Sigmoid colon (tissue), 7 donors: ENCODE measurements at regions of chr17 and their contacts with region 1.

Region 1: DNA sequence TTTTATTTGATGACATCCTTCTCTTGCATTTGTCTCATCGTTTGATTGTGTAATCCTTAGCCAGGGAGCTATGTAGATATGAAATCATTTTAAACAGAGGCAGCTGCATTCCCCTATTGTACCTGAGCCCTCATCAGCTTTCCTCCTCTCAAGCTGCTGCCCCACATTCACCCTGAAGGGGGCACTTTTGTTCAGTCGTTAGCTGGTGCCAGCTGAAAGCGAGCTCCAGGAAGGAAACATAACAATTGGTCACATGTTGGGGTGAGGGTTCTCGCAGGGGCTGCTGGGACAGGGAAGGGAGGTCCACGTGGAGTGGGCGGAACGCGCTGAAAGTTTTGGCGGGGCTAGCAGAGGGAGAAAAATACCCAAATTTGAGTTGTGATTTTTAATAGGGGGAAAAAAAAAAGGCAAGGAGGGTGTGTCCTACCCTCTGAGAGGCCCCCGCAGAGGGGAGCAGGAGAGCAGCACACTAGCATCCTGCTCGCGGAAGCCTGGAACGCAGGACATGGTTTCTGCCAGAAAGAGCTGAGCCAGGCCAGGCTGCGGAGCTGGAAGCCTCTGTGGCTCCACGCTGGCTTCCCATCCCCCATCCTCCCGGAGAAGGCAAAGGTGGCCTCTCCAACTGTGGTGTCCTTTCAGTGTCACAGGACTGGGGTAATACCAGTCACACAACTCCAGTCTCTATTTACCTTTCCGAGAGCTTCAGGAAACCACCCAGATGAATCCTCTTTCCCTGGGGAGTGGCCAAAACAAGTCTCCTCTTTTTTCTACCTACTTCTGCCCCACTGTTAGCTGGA is 8.5 kb upstream of the MSL1 start:
- DNase-seq: peak; percentile 98
- H3K4me3 ChIP-seq: peak overlapping the region; percentile 8 to 51 (median 43)
- H3K27ac ChIP-seq: peak overlapping the region; percentile 97 to 100 (median 98)
- H3K4me1 ChIP-seq: peaks cover 0 to 66% (median 59%) of the 10 kb centered on the region in 4 donors
- H3K27me3 ChIP-seq: no peaks in the 10 kb centered on the region
- CTCF ChIP-seq: peak; percentile 81 to 98 (median 86)
- EP300 ChIP-seq: peak in 1 of 4 donors; percentile 91
- POLR2A ChIP-seq: peak in 1 of 2 donors; percentile 6

Region 2: DNA sequence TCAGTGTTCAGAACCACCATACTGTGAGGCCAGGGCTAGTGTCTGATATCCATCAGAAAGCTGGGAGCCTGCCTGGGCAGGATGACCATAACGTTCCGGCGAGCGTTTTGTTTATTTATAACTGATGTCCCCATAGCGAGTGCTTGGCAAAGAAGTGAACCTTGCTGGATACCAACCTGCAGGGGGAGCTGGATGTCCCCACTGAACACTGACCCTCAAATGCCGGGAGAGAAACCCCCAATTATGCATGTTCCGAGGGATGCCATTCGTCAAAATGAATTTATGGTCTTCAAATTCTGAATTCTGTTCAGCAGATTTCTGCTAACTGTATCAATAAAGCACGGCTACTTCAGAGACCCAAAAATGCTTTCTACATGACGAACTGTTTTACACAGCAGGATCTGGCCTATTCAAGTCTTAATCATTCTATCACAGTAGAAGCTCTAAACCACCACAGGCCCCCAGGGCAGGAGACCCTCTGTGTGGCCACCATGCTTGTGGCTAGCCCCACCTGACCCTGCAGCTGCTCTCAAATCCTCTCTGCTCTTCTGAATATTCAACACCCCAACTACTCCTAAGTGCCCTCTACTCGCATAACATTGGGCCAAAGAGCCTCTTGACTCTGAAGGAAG is 74.3 kb before region 1 on chr17:
- intact Hi-C with region 1: loop called (anchors 2 kb)
- DNase-seq: peak; percentile 96
- H3K4me3 ChIP-seq: no peak overlapping the region
- H3K27ac ChIP-seq: peak overlapping the region; percentile 80 to 86 (median 84)
- H3K4me1 ChIP-seq: peaks cover 0 to 41% (median 35%) of the 10 kb centered on the region in 4 donors
- H3K27me3 ChIP-seq: no peaks in the 10 kb centered on the region
- CTCF ChIP-seq: peak; percentile 77 to 85 (median 83)
- EP300 ChIP-seq: peak; percentile 17 to 83 (median 70)
- POLR2A ChIP-seq: no peak

Region 3: GRCh38 chr17:40062329-40063186 is 50.8 kb before region 1 on chr17 and contains the start of gene THRA:
- intact Hi-C with region 1: loop called (anchors 2 kb)
- DNase-seq: peak; percentile 88
- H3K4me3 ChIP-seq: peak within 1 kb of the TSS; percentile 87 to 98 (median 95)
- H3K27ac ChIP-seq: peak within 1 kb of the TSS; percentile 96 to 99 (median 98)
- H3K4me1 ChIP-seq: peaks cover 0 to 84% (median 64%) of the 10 kb centered on the region in 4 donors
- H3K27me3 ChIP-seq: no peaks in the 10 kb centered on the region
- CTCF ChIP-seq: peak in 1 of 4 experiments; percentile 22
- EP300 ChIP-seq: no peak
- POLR2A ChIP-seq: no peak
- total RNA-seq, gene THRA: 78.8 to 86.1 (median 83.8) TPM

Region 4: DNA sequence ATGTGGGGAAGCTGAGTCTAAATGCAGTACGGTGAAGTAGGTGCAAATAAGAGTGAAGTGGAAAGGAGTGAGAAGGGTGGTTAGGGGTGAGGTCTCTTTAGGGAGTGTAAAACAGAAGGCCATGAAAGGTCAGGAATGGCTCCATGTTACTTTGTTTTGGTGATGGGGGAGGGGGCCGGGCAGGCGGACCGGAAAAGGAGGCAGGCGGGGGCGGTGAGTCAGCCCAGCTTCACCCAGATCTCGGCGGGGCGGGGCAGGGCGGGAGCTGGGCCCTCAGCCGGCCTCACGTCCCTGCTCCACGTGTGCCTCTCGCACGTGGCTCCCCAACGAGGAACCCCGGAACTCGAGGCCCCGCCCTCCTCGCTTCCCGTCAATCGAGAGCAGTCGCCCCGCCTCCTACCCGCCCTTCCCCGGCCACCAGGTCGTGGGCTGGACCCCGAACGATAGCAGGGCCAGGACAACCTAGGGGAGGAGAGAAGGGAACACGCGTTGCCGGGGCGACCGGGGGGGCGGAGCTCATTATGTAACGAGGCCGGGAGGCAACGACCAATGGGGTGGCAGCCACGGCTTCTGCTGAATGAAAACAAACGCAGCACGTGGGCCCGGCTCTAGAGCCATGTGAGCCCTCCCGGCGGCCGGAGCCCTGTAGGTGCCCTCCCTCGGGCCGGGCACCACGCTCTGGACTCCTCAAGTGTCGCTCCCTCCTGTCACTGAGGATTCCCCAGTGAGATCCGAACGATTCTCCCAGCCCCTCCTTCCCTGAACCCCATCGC is 14.3 kb before region 1 on chr17:
- intact Hi-C with region 1: loop called (anchors 1 kb)
- DNase-seq: peak; percentile 100
- H3K4me3 ChIP-seq: peak overlapping the region; percentile 69 to 97 (median 90)
- H3K27ac ChIP-seq: peak overlapping the region; percentile 97 to 100 (median 98)
- H3K4me1 ChIP-seq: peaks cover 0 to 81% (median 79%) of the 10 kb centered on the region in 4 donors
- H3K27me3 ChIP-seq: no peaks in the 10 kb centered on the region
- CTCF ChIP-seq: no peak
- EP300 ChIP-seq: peak in 2 of 4 donors; percentile 75 to 94
- POLR2A ChIP-seq: peak; percentile 92 to 97

Region 5: GRCh38 chr17:40168262-40168832 is 55.0 kb after region 1 on chr17:
- intact Hi-C with region 1: loop called (anchors 1 kb)
- DNase-seq: peak; percentile 71
- H3K4me3 ChIP-seq: no peak overlapping the region
- H3K27ac ChIP-seq: peak overlapping the region; percentile 57 to 76 (median 62)
- H3K4me1 ChIP-seq: peaks cover 0 to 11% (median 5%) of the 10 kb centered on the region in 4 donors
- H3K27me3 ChIP-seq: no peaks in the 10 kb centered on the region
- CTCF ChIP-seq: peak; percentile 79 to 95 (median 86)
- EP300 ChIP-seq: no peak
- POLR2A ChIP-seq: no peak

Region 6: DNA sequence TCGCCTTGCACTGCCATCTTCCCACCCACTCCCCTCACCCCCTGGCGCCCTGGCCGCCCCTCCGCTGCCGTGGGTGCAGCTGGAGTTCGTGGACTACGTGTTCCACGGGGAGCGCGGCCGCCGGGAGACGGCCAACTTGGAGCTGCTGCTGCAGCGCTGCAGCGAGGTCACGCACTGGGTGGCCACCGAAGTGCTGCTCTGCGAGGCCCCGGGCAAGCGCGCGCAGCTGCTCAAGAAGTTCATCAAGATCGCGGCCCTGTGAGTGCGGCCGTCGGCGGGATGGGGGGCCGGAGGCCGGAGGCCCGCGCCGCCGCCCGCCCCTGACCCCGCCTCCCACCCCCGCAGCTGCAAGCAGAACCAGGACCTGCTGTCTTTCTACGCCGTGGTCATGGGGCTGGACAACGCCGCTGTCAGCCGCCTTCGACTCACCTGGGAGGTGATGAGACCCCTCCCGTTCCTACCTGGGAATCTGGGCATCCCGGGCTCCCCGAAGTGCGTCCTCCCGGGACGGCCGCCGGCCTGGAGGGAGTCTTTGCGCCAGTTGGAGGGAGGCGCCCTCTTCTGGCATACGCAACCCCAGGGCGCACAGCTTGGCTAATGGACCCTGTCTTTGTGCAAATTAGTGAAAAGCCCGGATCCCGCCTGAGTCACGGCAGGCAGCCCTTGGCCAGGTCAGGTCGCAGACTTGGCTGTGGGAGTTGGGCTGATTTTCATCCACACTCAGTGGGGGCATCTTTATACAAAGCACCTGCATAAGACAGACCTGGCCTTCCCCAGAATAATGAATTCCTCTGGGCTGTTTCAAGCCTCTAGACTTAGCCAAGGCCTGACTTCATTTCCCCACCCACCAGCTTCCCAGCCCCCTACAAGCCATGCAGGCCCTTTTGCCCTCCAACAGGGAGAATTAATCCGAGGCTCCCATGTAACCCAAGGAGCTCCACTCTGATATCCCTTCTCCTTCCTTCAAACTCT is 78.2 kb after region 1 on chr17:
- intact Hi-C with region 1: loop called (anchors 1 kb)
- DNase-seq: peak; percentile 89
- H3K4me3 ChIP-seq: peak overlapping the region; percentile 43 to 71 (median 57)
- H3K27ac ChIP-seq: peak overlapping the region; percentile 59 to 82 (median 72)
- H3K4me1 ChIP-seq: peaks cover 0 to 19% (median 15%) of the 10 kb centered on the region in 4 donors
- H3K27me3 ChIP-seq: no peaks in the 10 kb centered on the region
- CTCF ChIP-seq: peak; percentile 14 to 65 (median 38)
- EP300 ChIP-seq: no peak
- POLR2A ChIP-seq: no peak

Region 7: DNA sequence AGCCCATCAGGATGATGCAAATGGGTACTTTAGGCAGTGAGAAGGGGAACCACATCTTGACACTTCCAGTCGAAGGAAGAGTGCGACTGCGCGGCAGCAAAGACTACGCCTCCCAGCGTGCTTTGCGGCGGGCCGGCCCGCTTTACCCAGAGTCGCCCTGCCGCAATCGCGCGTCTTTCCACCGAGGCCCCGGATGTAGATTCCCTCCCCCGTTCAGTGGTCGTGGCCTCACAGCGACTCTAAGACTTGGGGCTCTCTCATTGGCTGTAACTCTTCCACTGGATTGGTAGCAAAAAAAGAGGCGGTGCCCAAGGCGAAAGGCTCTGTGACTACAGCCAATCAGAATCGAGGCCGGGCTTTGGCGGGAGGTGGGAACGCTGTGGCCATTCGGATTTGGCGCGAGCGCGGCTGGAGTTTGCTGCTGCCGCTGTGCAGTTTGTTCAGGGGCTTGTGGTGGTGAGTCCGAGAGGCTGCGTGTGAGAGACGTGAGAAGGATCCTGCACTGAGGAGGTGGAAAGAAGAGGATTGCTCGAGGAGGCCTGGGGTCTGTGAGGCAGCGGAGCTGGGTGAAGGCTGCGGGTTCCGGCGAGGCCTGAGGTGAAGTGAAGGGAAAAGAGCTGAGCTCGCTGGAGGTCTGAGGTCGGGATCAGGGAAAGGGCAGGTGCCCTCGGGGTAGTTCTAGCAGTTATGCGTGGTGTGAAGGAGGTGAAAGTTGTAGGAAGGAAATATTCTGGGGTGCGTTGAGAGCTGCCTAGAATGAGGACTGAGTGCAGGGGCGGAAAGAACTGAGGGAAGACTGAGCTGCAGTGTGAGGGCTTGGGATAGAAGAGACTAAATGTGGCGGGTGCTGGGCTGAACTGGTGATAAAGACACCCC is 174.4 kb after region 1 on chr17 and contains the start of gene CDC6:
- intact Hi-C with region 1: loop called (anchors 5 kb)
- DNase-seq: peak; percentile 99
- H3K4me3 ChIP-seq: peak within 1 kb of the TSS; percentile 26 to 50 (median 46)
- H3K27ac ChIP-seq: peak within 1 kb of the TSS; percentile 41 to 43 (median 42)
- H3K4me1 ChIP-seq: peaks cover 0 to 28% (median 16%) of the 10 kb centered on the region in 4 donors
- H3K27me3 ChIP-seq: no peaks in the 10 kb centered on the region
- CTCF ChIP-seq: no peak
- EP300 ChIP-seq: peak in 1 of 4 donors; percentile 50
- POLR2A ChIP-seq: no peak
- total RNA-seq, gene CDC6: 0.33 to 1.5 (median 0.83) TPM in 3 of 4 donors, not detected in the other